H1 (cell line): ENCODE measurements at regions of chr1 and their contacts with region 1.

Region 1: GRCh38 chr1:109282952-109283747 is at the start of gene PSRC1:
- DNase-seq: peak; percentile 81 to 96
- H3K4me3 ChIP-seq: peak within 1 kb of the TSS; percentile 54 to 95 (median 86)
- H3K27ac ChIP-seq: peak within 1 kb of the TSS; percentile 87
- H3K4me1 ChIP-seq: peaks cover 8 to 11% (median 10%) of the 10 kb centered on the region in 4 experiments
- H3K27me3 ChIP-seq: no peaks in the 10 kb centered on the region
- CTCF ChIP-seq: no peak; a peak in 1 of 4 replicates
- EP300 ChIP-seq: no peak
- POLR2A ChIP-seq: peak; percentile 81 to 88; a peak in 2 of 3 replicates
- RAD21 ChIP-seq: no peak
- total RNA-seq, gene PSRC1: 67.3 and 69.6 TPM in 2 replicates

Region 2: DNA sequence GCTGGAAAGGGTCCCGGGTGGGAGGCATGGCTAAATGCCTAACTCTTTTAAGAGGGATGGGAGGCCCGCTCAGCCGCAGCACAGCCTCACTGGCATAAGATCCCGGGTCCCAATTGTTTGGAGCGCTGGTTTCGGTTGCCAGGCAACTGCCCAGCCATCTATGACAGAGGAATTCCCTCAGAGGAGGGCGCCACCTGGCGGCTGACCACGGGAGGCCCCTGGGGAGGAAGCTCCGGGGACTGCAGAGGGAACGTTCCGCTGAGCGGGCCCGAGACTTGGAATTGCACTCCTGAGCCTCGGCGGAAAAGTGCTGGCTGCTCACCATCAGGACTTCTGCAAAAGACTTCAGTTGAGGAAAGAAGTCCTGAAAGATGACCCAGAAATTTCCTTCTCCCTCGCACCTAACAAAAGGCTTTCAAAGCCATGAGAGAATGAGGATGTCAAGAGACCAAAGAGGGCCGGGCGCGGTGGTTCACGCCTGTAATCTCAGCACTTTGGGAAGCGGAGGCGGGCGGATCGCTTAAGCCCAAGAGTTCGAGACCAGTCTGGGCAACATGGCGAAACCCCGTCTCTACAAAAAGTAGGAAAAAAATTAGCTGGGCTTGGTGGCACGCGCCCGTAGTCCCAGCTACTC is 170.4 kb before region 1 on chr1:
- CTCF ChIA-PET with region 1: no interaction called
- POLR2A ChIA-PET with region 1: no interaction called
- DNase-seq: peak; percentile 85 to 100
- H3K4me3 ChIP-seq: peak overlapping the region in 1 of 4 experiments; percentile 72; a peak in 5 of 8 replicates
- H3K27ac ChIP-seq: no peak overlapping the region
- H3K4me1 ChIP-seq: peaks cover 0 to 9% (median 3%) of the 10 kb centered on the region in 4 experiments; a peak in 4 of 7 replicates
- H3K27me3 ChIP-seq: peaks cover 15 to 45% (median 32%) of the 10 kb centered on the region in 4 experiments
- CTCF ChIP-seq: peak; percentile 86 to 96 (median 92)
- EP300 ChIP-seq: peak in 1 of 2 experiments; percentile 73; a peak in 1 of 3 replicates
- POLR2A ChIP-seq: no peak
- RAD21 ChIP-seq: peak; percentile 72 to 83

Region 3: GRCh38 chr1:109298666-109299557 is 15.8 kb after region 1 on chr1:
- CTCF ChIA-PET with region 1: interaction called, 21 read pairs
- POLR2A ChIA-PET with region 1: interaction called, 11 read pairs
- DNase-seq: no peak
- H3K4me3 ChIP-seq: no peak overlapping the region
- H3K27ac ChIP-seq: no peak overlapping the region
- H3K4me1 ChIP-seq: peaks cover 0 to 4% (median 0%) of the 10 kb centered on the region in 4 experiments; a peak in 1 of 7 replicates
- H3K27me3 ChIP-seq: no peaks in the 10 kb centered on the region; a peak in 2 of 7 replicates
- CTCF ChIP-seq: no peak
- EP300 ChIP-seq: no peak
- POLR2A ChIP-seq: no peak
- RAD21 ChIP-seq: no peak